AG04449 (cell line): ENCODE measurements at regions of chr19 and their contacts with region 1.

Region 1: DNA sequence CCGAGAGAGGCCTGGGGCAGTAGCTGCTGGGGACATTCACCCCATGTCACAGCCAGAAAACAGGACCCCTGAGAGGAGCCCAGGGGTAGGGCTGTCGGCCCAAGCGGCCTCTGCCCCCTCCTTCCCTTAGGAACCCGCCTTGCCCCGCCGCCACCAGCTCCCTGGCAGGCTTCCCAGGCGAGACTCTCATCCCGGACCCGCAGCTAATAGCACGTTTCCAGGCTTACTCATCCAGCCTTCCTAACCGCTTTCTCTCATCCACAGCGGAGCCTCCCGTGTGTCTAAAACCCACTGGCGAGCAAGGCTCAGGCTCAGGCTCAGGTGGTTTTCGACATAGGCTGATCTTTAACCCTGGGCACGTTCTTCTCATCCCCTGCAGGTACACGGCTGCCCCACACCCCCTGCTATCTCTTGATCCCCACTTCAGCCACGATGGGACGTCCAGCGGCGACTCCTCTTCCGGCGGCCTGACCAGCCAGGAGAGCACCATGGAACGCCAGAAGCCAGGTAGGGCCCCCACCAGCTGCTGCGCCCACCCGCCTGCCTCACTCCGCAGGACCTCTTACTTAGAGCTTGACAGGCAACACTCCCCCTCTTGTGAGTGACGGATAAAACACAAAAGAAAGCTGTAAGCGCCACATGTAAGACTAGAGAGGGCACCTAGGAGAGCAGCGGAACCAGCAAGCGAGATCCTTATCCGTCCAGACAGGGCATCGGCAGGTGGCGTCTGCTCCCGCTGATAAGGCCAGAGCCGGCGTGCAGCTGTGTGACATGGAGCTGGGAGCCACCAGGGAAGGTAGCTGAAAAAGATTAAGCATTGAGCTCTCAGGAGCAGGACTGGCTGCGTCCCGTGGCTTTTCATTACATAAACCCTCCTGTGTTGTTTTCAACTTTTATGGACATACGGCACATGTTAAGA is 71.3 kb downstream of the DPF1 start:
- DNase-seq: no peak
- H3K4me3 ChIP-seq: no peak overlapping the region
- CTCF ChIP-seq: no peak

Region 2: GRCh38 chr19:38142176-38143035 is 10.3 kb before region 1 on chr19:
- CTCF ChIA-PET with region 1: interaction called, 33 read pairs
- POLR2A ChIA-PET with region 1: no interaction called
- DNase-seq: no peak
- H3K4me3 ChIP-seq: no peak overlapping the region
- CTCF ChIP-seq: peak; percentile 85